HEK293 (cell line): ENCODE measurements at regions of chr16 and their contacts with region 1.

Region 1: GRCh38 chr16:67246934-67247697 is at the start of gene FHOD1:
- H3K4me3 ChIP-seq: peak within 1 kb of the TSS; percentile 69
- H3K27ac ChIP-seq: peak within 1 kb of the TSS; percentile 75
- H3K4me1 ChIP-seq: peaks cover 9% of the 10 kb centered on the region
- CTCF ChIP-seq: no peak; the same call in 1 of the 2 replicates

Region 2: DNA sequence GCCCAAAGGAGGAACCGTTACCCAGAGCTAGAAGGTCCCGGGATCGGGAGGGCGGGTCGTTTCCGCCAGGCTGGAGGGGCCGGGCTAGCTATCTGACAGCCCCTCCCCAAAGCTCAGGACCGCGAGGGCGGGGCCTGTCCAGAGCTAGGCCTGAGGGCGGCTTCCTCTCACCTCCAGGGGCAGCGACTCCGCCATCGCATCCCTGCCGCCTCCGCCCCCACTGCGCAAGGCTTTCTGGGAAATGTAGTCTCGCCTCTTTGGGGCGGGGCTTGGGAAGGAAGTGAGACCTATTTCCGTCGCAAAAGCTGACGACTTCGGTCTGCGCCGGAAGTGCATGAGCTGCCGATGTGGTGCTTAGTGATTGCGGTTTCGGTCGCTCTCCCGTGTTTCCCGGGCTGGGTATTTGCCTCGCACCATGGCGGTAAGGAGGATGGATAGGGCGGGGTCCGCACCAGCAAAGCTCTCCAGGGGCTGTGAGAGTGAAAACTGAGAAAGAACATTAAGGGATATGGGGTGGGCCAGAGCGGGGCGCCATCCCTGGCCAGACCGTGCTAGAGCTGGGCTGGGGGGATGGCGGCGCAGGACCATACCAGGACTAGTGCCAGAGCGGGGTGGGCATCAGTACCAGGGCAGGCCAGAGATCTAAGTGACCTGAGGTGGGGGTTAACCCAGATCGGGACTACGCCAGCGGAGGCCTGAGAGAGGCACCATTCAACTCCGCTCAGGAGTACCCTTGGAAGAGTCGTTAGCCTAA is 20.1 kb before region 1 on chr16 and contains the start of gene TMEM208:
- CTCF ChIA-PET with region 1: interaction called, 5 read pairs
- POLR2A ChIA-PET with region 1: interaction called, 109 read pairs
- H3K4me3 ChIP-seq: peak within 1 kb of the TSS; percentile 93
- H3K27ac ChIP-seq: no peak within 1 kb of the TSS; the same call in 1 of the 2 replicates
- H3K4me1 ChIP-seq: no peaks in the 10 kb centered on the region
- CTCF ChIP-seq: peak; percentile 83

Region 3: GRCh38 chr16:67236563-67237395 is 10.3 kb before region 1 on chr16:
- CTCF ChIA-PET with region 1: interaction called, 5 read pairs
- POLR2A ChIA-PET with region 1: interaction called, 109 read pairs
- H3K4me3 ChIP-seq: no peak overlapping the region
- H3K27ac ChIP-seq: no peak overlapping the region
- H3K4me1 ChIP-seq: no peaks in the 10 kb centered on the region
- CTCF ChIP-seq: no peak